ENCODE measurements at regions of chr3 and their contacts with region 1.

Region 1: GRCh38 chr3:64533617-64534317 is 154.0 kb downstream of the ADAMTS9 start:
- DNase-seq: peak; percentile 66
- H3K4me3 ChIP-seq: no peak overlapping the region
- H3K27ac ChIP-seq: no peak overlapping the region
- H3K4me1 ChIP-seq: no peaks in the 10 kb centered on the region
- H3K27me3 ChIP-seq: no peaks in the 10 kb centered on the region
- CTCF ChIP-seq: peak; percentile 80 to 96

Region 2: DNA sequence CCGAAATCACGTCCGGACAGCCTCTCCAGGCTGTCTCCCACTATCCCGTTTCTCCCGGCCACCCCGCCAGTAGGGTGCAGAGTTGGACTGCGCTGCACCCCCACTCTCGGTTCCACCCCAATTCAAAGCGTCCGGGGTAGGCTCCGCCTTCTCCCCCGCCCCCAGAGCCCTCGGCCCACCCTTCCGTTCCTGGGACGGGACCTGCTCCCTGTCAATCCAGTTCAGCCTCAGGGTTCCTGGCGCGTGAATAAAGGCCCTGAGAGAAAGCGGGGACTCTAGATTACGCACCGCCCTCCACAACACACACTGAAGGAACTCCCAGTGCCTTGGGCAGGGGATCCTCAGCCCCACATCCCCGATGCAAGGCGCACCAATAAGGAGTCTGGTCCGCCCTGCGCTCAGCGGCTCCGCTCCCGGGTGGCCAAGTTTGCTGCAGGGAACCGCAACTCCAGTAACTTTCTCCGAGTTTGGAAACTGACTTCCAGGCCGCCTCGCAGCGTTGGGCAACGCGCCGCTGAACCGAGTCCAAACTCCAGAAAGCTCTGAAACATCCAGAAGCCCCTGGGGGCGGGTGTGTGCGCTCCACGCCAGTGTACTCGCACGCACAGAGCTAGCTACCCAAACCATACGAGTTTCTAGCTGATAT is 152.2 kb after region 1 on chr3:
- CTCF ChIA-PET with region 1: no interaction called
- dilution Hi-C with region 1: no loop called
- in situ Hi-C with region 1: no loop called
- intact Hi-C with region 1: loop called (anchors 1 kb)
- DNase-seq: peak; percentile 95
- H3K4me3 ChIP-seq: peak overlapping the region; percentile 64 to 71 (median 69)
- H3K27ac ChIP-seq: peak overlapping the region; percentile 34
- H3K4me1 ChIP-seq: peaks cover 10% of the 10 kb centered on the region
- H3K27me3 ChIP-seq: no peaks in the 10 kb centered on the region
- CTCF ChIP-seq: peak; percentile 17 to 56

Region 3: DNA sequence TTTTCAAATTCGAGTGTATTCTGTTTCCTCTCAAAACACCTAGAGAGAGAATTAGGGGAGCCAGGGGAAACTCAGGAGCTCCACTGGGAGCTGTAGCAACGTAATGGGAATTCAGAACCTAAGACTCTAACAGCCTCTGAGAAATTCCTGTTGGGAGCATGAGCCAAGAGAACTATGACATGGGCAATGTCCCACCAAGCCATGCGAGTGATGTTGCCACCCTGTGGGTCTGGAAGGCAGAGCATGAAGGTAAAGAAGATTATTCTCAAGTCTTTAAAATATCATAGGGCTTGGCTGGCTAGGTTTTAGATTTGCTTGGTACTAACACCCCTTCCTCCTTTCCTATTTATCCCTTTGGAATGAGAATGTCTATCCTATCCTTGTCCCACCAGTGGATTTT is 546.7 kb after region 1 on chr3:
- CTCF ChIA-PET with region 1: no interaction called
- dilution Hi-C with region 1: no loop called
- in situ Hi-C with region 1: no loop called
- intact Hi-C with region 1: loop called (anchors 1 kb)
- DNase-seq: no peak
- H3K4me3 ChIP-seq: no peak overlapping the region
- H3K27ac ChIP-seq: no peak overlapping the region
- H3K4me1 ChIP-seq: no peaks in the 10 kb centered on the region
- H3K27me3 ChIP-seq: no peaks in the 10 kb centered on the region
- CTCF ChIP-seq: peak in 1 of 2 donors; percentile 36

Region 4: GRCh38 chr3:65245133-65246063 is 711.6 kb after region 1 on chr3:
- CTCF ChIA-PET with region 1: interaction called, 3 read pairs
- dilution Hi-C with region 1: no loop called
- in situ Hi-C with region 1: loop called (anchors 10 kb)
- intact Hi-C with region 1: loop called (anchors 1 kb)
- DNase-seq: peak; percentile 18
- H3K4me3 ChIP-seq: no peak overlapping the region
- H3K27ac ChIP-seq: no peak overlapping the region
- H3K4me1 ChIP-seq: no peaks in the 10 kb centered on the region
- H3K27me3 ChIP-seq: peaks cover 2% of the 10 kb centered on the region
- CTCF ChIP-seq: peak; percentile 52 to 53

Region 5: DNA sequence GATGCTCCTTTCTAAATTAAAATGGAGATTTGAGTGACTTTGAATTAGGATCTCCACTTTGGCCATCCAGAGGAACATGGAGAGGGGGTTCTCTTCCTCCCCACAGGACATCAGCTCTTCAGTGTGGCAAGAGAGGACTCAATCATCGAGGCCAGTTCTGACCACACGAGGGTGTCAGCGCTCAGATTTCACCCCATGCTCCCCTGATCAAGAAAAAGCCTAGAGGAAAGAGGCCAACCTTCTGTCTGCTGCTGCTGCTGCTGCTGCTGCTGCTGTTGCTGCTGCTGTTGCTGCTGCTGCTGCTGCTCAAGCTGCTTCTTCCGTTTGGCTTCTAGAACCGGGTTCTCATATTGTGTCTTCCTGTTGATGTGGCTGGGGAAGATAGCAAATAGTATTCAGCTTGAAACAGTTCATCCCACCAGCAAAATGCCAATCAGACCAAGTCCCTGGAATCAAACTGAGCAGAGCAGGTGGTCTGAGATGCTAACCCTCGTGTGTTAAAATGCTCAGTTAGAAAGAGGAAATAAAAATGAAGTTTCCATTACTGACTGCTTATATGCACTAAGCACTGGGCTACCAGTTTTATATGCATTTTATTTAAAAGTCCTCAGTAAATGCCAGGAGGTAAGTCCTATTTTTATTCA is 906.0 kb after region 1 on chr3:
- CTCF ChIA-PET with region 1: interaction called, 5 read pairs
- dilution Hi-C with region 1: no loop called
- in situ Hi-C with region 1: no loop called
- intact Hi-C with region 1: loop called (anchors 1 kb)
- DNase-seq: peak; percentile 39
- H3K4me3 ChIP-seq: no peak overlapping the region
- H3K27ac ChIP-seq: no peak overlapping the region
- H3K4me1 ChIP-seq: no peaks in the 10 kb centered on the region
- H3K27me3 ChIP-seq: no peaks in the 10 kb centered on the region
- CTCF ChIP-seq: peak; percentile 46 to 76

Region 6: GRCh38 chr3:65751123-65751700 is 1217.4 kb after region 1 on chr3:
- CTCF ChIA-PET with region 1: interaction called, 3 read pairs
- dilution Hi-C with region 1: no loop called
- in situ Hi-C with region 1: loop called in 1 of 2 experiments (anchors 25 kb)
- intact Hi-C with region 1: loop called (anchors 5 kb)
- DNase-seq: peak; percentile 11
- H3K4me3 ChIP-seq: no peak overlapping the region
- H3K27ac ChIP-seq: no peak overlapping the region
- H3K4me1 ChIP-seq: no peaks in the 10 kb centered on the region
- H3K27me3 ChIP-seq: no peaks in the 10 kb centered on the region
- CTCF ChIP-seq: peak; percentile 73 to 76

Measured in mammary epithelial cell (primary cell).